ENCODE measurements at regions of chr15 and their contacts with region 1.

Region 1: GRCh38 chr15:42273102-42273899 is at the starts of genes GANC and TMEM87A:
- DNase-seq: peak; percentile 98
- ATAC-seq: peak; percentile 95
- H3K4me3 ChIP-seq: peak within 1 kb of the TSS; percentile 63 to 89 (median 80)
- H3K27ac ChIP-seq: peak within 1 kb of the TSS; percentile 98
- H3K4me1 ChIP-seq: peaks cover 40% of the 10 kb centered on the region
- H3K27me3 ChIP-seq: no peaks in the 10 kb centered on the region; a peak in 1 of 5 replicates
- CTCF ChIP-seq: no peak; the same call in 1 of the 2 replicates
- EP300 ChIP-seq: 0 out of 4 replicates have a peak, but pooled peaks of 1 of the 2 experiments have one; percentile 6
- POLR2A ChIP-seq: peak; percentile 86 to 98
- RAD21 ChIP-seq: peak; percentile 7; the same call in 1 of the 2 replicates
- total RNA-seq, gene GANC: 21.0 and 25.8 TPM in 2 replicates
- total RNA-seq, gene TMEM87A: 22.8 and 42.8 TPM in 2 replicates

Region 2: GRCh38 chr15:42286445-42287029 is 13.2 kb after region 1 on chr15:
- CTCF ChIA-PET with region 1: no interaction called
- POLR2A ChIA-PET with region 1: interaction called, 11 read pairs
- in situ Hi-C with region 1: no loop called
- intact Hi-C with region 1: no loop called
- DNase-seq: peak; percentile 63
- ATAC-seq: peak; percentile 88
- H3K4me3 ChIP-seq: no peak overlapping the region
- H3K27ac ChIP-seq: peak overlapping the region; percentile 27
- H3K4me1 ChIP-seq: peaks cover 33% of the 10 kb centered on the region
- H3K27me3 ChIP-seq: no peaks in the 10 kb centered on the region
- CTCF ChIP-seq: no peak
- EP300 ChIP-seq: peak in 1 of 2 experiments; percentile 73; a peak in 2 of 4 replicates
- POLR2A ChIP-seq: no peak
- RAD21 ChIP-seq: no peak

Region 3: GRCh38 chr15:42385206-42385979 is 112.1 kb after region 1 on chr15:
- CTCF ChIA-PET with region 1: no interaction called
- POLR2A ChIA-PET with region 1: interaction called, 4 read pairs
- in situ Hi-C with region 1: no loop called
- intact Hi-C with region 1: loop called (anchors 2 kb)
- DNase-seq: peak; percentile 45
- ATAC-seq: peak; percentile 92
- H3K4me3 ChIP-seq: no peak overlapping the region
- H3K27ac ChIP-seq: no peak overlapping the region
- H3K4me1 ChIP-seq: peaks cover 21% of the 10 kb centered on the region
- H3K27me3 ChIP-seq: no peaks in the 10 kb centered on the region
- CTCF ChIP-seq: peak; percentile 86
- EP300 ChIP-seq: no peak
- POLR2A ChIP-seq: no peak
- RAD21 ChIP-seq: peak; percentile 81

Region 4: DNA sequence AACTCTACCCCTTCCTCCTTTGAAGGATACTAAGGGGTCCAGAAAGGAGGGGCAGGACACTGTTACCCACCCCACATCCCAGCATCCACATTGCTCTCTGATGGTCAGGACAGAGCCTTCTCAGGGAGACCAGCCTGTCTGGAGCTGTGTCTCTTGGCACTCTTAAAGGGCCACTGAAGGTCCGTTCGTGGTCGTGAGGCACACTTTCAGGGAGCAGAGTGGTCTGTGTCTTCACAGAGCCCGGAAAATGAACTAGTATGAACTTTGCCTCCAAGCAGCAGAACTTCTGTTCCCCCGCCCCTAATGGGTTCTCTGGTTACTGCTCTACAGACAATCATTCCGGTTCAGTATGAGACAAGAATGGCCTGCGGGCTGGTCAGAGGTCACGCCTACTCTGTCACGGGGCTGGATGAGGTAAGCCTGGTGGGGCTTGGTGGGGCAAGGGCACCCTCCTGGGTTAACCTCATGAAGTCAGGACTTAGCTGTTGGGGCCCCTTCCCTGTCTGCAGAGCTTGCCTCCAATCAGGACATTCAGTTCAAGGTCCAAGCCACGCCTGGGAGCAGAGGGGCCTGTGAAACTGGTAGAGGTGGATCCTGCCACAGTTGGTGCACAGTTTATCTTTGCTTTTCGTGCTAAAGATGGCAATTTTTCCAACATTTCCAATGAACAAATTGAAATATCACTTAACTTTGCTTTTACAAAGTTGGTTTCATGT is 119.2 kb after region 1 on chr15:
- CTCF ChIA-PET with region 1: no interaction called
- POLR2A ChIA-PET with region 1: interaction called, 28 read pairs
- in situ Hi-C with region 1: no loop called
- intact Hi-C with region 1: no loop called
- DNase-seq: peak; percentile 98
- ATAC-seq: peak; percentile 99
- H3K4me3 ChIP-seq: peak overlapping the region; percentile 48 to 74 (median 50); a peak in 5 of 6 replicates
- H3K27ac ChIP-seq: peak overlapping the region; percentile 100
- H3K4me1 ChIP-seq: peaks cover 59% of the 10 kb centered on the region
- H3K27me3 ChIP-seq: no peaks in the 10 kb centered on the region
- CTCF ChIP-seq: peak; percentile 38; the same call in 1 of the 2 replicates
- EP300 ChIP-seq: peak; percentile 62 to 72; a peak in 2 of 4 replicates
- POLR2A ChIP-seq: peak; percentile 80 to 95
- RAD21 ChIP-seq: peak; percentile 32; the same call in 1 of the 2 replicates

Region 5: GRCh38 chr15:42474827-42475226 is 201.5 kb after region 1 on chr15:
- CTCF ChIA-PET with region 1: no interaction called
- POLR2A ChIA-PET with region 1: no interaction called
- in situ Hi-C with region 1: no loop called
- intact Hi-C with region 1: loop called (anchors 5 kb)
- DNase-seq: no peak
- ATAC-seq: no peak
- H3K4me3 ChIP-seq: no peak overlapping the region
- H3K27ac ChIP-seq: no peak overlapping the region
- H3K4me1 ChIP-seq: no peaks in the 10 kb centered on the region
- H3K27me3 ChIP-seq: no peaks in the 10 kb centered on the region
- CTCF ChIP-seq: no peak
- EP300 ChIP-seq: no peak
- POLR2A ChIP-seq: no peak
- RAD21 ChIP-seq: no peak

Region 6: GRCh38 chr15:42495361-42496212 is 222.3 kb after region 1 on chr15 and contains the start of gene SNAP23:
- CTCF ChIA-PET with region 1: no interaction called
- POLR2A ChIA-PET with region 1: interaction called, 10 read pairs
- in situ Hi-C with region 1: no loop called
- intact Hi-C with region 1: no loop called
- DNase-seq: peak; percentile 94
- ATAC-seq: peak; percentile 96
- H3K4me3 ChIP-seq: peak within 1 kb of the TSS; percentile 78 to 84 (median 82)
- H3K27ac ChIP-seq: peak within 1 kb of the TSS; percentile 82
- H3K4me1 ChIP-seq: peaks cover 72% of the 10 kb centered on the region
- H3K27me3 ChIP-seq: no peaks in the 10 kb centered on the region; a peak in 1 of 5 replicates
- CTCF ChIP-seq: no peak
- EP300 ChIP-seq: no peak
- POLR2A ChIP-seq: peak; percentile 74 to 88
- RAD21 ChIP-seq: no peak; the same call in 1 of the 2 replicates
- total RNA-seq, gene SNAP23: 101 and 136 TPM in 2 replicates